IMR-90 (cell line): ENCODE measurements at regions of chr4 and their contacts with region 1.

Region 1: DNA sequence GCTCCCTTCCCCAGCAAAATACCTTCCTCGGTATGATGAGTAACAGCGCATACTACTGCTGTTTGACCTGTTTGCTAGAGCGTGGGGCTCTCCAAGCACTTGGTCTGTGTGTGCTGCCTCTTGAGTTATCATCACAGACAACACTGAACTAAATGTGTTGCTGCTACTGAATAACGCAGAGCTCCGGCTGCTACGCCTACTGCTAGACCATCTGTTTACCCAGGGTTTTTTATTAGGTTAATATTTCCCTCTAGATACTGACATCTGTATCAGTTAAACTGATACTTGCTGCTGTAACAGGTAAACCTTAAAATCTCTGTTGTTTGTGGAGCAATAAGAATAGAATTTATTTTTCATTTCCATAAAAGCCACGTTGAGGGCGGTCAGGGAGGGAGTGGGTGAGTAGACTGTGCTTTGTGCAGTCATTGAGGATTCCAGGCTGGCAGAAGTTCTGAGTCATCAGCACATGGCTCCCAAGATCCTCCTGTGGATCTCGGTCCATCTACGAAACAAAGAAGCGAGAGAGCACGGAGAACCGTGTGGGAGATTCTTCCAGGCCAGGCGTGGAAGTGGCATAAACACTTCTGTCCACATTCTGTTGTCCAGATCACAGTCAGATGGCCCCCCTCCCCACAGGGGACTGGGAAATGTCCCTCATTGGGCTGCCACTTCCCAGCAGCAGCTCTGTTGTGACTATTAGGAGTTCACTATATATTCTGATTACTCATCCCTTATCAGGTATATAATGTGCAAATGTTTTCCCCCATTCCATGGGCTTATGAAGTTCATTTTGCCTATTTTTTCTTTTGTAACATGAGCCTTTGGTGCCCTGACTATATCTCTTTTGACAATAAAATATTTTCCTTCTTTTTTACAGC is 14.1 kb downstream of the GRK4 start:
- DNase-seq: peak; percentile 56
- ATAC-seq: peak; percentile 57
- H3K4me3 ChIP-seq: no peak overlapping the region
- H3K27ac ChIP-seq: no peak overlapping the region
- H3K4me1 ChIP-seq: no peaks in the 10 kb centered on the region
- H3K27me3 ChIP-seq: no peaks in the 10 kb centered on the region; the same call in none of the 2 replicates
- CTCF ChIP-seq: no peak
- POLR2A ChIP-seq: no peak
- RAD21 ChIP-seq: no peak

Region 2: DNA sequence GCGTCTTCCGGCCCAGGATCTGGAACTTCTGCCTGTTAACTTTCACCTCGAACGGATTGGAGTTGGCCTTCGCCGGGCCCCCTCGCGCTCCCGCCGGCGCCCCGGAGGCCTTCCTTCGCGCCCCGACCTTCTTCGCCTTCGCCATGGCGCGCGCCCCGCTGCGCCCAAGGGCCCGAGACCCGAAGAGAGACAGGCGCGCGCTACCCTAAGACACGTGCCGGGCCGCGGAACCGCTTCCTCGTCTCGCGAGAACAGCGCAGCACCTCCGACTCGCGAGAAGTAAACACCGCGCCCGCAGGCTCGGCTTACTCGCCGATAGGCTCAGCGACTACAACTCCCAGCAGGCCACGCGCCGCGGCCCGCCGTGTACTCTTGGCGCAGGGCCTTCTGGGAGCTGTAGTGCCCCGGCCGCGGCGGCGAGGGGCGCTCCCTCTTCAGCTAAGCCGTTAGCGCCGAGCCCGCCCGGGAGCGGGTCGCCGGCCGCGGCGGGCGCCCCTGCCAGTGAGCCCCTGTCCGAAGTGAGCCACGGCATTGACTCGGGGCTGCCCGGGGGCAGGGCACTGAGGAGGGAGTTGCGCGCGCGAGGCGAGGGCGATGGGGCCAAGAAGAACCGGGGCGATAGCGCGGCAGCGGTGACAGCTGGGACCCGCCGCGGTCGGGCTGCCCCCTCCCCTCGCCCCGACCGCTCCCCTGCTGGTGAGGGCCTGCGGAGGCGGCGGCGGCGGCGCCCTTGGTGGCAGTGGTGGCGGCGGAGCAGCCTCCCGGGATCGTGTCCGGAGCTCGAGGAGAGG is 14.1 kb before region 1 on chr4 and contains the starts of genes GRK4 and NOP14:
- CTCF ChIA-PET with region 1: interaction called, 12 read pairs
- POLR2A ChIA-PET with region 1: no interaction called
- dilution Hi-C with region 1: no loop called
- in situ Hi-C with region 1: no loop called
- intact Hi-C with region 1: no loop called
- DNase-seq: peak; percentile 98
- ATAC-seq: peak; percentile 94
- H3K4me3 ChIP-seq: peak within 1 kb of the TSS; percentile 87
- H3K27ac ChIP-seq: peak within 1 kb of the TSS; percentile 72
- H3K4me1 ChIP-seq: peaks cover 13% of the 10 kb centered on the region
- H3K27me3 ChIP-seq: no peaks in the 10 kb centered on the region
- CTCF ChIP-seq: peak; percentile 41; the same call in 1 of the 2 replicates
- POLR2A ChIP-seq: peak; percentile 78
- RAD21 ChIP-seq: 0 out of 2 replicates have a peak, but pooled peaks have one; percentile 5
- total RNA-seq, gene GRK4: 1.6 and 1.7 TPM in 2 replicates
- total RNA-seq, gene NOP14: 10.9 and 19.2 TPM in 2 replicates

Region 3: GRCh38 chr4:3037957-3038461 is 60.6 kb after region 1 on chr4:
- CTCF ChIA-PET with region 1: interaction called, 9 read pairs
- POLR2A ChIA-PET with region 1: no interaction called
- dilution Hi-C with region 1: no loop called
- in situ Hi-C with region 1: no loop called
- intact Hi-C with region 1: loop called (anchors 1 kb)
- DNase-seq: no peak
- ATAC-seq: no peak
- H3K4me3 ChIP-seq: no peak overlapping the region
- H3K27ac ChIP-seq: no peak overlapping the region
- H3K4me1 ChIP-seq: peaks cover 2% of the 10 kb centered on the region; the same call in 1 of the 2 replicates
- H3K27me3 ChIP-seq: peaks cover 25% of the 10 kb centered on the region
- CTCF ChIP-seq: no peak
- POLR2A ChIP-seq: no peak
- RAD21 ChIP-seq: no peak

Region 4: DNA sequence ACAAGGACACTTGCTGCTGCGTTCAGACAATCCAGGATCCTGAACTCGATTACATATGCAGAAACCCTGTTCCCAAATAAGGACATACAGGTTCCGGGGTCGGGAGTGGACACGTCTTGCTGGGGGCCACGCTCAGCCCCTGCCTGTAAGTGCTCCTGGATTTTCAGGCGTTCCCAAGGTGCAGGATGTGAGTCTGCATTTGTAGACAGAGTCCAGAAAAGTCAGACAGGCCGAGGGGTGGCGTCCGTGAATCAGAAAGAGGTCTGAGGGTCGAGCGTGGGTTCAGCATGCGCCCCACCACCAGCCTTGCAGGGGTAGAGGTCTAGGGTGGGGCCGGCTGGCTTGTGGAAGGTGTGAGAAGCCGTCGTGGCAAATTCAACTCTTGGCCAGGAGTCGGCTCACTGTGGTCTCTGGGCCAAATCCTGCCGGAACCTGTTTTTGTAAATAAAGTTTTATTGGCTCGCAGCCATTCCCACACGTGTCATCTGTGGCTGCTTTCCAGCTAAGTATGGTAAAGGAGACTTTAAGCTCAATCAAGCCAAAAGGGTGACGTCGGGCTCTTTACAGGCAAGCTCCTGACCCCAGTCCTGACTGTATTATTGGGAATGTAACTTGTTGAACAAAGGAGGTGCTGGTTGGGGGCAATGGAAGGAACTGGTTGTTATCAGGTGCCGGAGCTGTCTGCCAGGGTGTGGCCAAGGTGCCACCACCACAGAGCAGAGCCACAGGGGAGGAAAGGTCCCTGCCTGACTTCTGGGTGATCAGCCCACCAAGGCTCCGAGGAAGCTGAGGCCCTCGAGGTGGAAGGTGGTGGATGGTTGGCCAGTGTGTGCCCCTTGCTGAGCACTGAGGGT is 493.0 kb after region 1 on chr4:
- CTCF ChIA-PET with region 1: no interaction called
- POLR2A ChIA-PET with region 1: no interaction called
- dilution Hi-C with region 1: no loop called
- in situ Hi-C with region 1: no loop called
- intact Hi-C with region 1: no loop called
- DNase-seq: peak; percentile 60
- ATAC-seq: peak; percentile 50; the same call in 1 of the 2 replicates
- H3K4me3 ChIP-seq: no peak overlapping the region
- H3K27ac ChIP-seq: no peak overlapping the region
- H3K4me1 ChIP-seq: no peaks in the 10 kb centered on the region
- H3K27me3 ChIP-seq: peaks cover 36% of the 10 kb centered on the region; the same call in 1 of the 2 replicates
- CTCF ChIP-seq: no peak
- POLR2A ChIP-seq: no peak
- RAD21 ChIP-seq: no peak